ENCODE measurements at regions of chr16 and their contacts with region 1.

Region 1: DNA sequence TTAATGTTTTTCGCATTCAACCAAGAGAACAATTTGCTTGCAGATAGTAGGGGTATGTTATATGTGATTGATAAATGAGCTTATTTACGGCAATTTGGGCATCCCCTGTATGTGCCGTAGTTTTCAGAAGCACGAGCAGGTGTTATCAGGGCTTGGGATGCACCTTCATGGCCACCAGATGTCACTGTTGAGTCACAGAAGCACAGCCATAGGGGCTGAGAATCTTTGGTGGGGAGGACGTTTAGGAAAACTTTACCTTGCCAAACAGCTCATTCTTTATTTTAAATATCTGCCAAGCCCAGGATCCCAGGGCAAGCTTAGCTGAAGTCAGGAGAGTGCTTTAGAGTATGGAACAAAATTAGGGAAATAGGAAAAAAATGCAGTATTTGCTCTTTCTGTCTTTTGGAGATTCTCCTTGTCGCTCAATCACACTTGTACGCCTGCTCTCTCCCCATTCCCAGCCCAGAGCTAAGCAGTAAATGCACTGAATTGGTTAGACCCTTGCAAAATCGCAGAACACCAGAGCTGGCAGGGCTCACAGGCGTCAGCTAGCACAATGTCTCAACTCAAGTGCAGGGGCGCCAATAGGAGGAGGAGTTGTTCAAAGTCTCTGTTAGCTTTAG is 93.6 kb upstream of the MPHOSPH6 start:
- DNase-seq: peak; percentile 55
- H3K4me3 ChIP-seq: no peak overlapping the region
- H3K27ac ChIP-seq: no peak overlapping the region
- H3K4me1 ChIP-seq: no peaks in the 10 kb centered on the region
- H3K27me3 ChIP-seq: peaks cover 4 to 13% of the 10 kb centered on the region in 2 experiments
- CTCF ChIP-seq: peak; percentile 84 to 85
- POLR2A ChIP-seq: no peak

Region 2: DNA sequence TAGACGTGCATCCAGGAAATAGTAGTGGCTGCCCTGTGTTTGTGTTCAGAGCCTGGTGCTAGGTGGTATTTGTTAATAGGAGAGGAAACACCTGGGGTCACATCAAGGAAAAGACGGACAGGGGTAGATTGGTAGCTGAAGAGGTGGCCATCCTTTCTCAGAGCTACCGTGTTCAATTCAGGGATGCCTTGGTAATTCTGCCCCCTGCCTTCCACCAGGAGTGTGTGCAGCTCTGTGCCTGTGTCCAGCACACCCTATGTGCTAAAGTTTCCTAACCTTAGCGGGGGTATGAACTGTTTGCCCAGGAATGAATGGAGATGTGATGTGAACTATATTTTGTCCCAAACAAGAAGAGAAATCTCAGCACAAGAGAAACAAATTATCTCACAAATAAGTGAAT is 80.5 kb after region 1 on chr16:
- CTCF ChIA-PET with region 1: interaction called, 11 read pairs
- POLR2A ChIA-PET with region 1: no interaction called
- dilution Hi-C with region 1: no loop called
- intact Hi-C with region 1: loop called (anchors 1 kb)
- DNase-seq: no peak
- H3K4me3 ChIP-seq: no peak overlapping the region
- H3K27ac ChIP-seq: no peak overlapping the region
- H3K4me1 ChIP-seq: no peaks in the 10 kb centered on the region
- H3K27me3 ChIP-seq: peaks cover 0 to 6% of the 10 kb centered on the region in 2 experiments
- CTCF ChIP-seq: peak; percentile 28 to 44
- POLR2A ChIP-seq: no peak

Region 3: DNA sequence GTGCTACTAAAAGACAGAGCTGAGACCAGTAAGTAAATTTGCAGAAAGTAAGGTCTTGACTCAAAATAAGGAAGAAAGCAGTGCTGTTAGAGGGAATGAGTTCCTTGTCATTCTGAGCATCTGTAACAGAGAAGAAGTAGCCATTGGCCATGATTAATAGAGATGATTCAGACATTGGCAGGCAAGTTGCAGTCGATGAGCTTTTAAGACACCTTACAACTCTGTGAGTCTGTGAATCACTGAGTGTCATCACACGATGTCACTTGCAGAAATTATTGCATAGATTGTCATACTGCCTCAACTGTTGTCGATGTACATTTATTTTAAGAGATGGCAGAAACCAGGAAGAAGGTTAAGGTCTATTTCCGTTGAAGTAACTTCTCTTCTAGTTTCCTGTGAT is 162.0 kb after region 1 on chr16:
- CTCF ChIA-PET with region 1: no interaction called
- POLR2A ChIA-PET with region 1: no interaction called
- dilution Hi-C with region 1: no loop called
- intact Hi-C with region 1: no loop called
- DNase-seq: no peak
- H3K4me3 ChIP-seq: no peak overlapping the region
- H3K27ac ChIP-seq: no peak overlapping the region
- H3K4me1 ChIP-seq: no peaks in the 10 kb centered on the region
- H3K27me3 ChIP-seq: peaks cover 6 to 21% of the 10 kb centered on the region in 2 experiments
- CTCF ChIP-seq: no peak
- POLR2A ChIP-seq: no peak

Region 4: DNA sequence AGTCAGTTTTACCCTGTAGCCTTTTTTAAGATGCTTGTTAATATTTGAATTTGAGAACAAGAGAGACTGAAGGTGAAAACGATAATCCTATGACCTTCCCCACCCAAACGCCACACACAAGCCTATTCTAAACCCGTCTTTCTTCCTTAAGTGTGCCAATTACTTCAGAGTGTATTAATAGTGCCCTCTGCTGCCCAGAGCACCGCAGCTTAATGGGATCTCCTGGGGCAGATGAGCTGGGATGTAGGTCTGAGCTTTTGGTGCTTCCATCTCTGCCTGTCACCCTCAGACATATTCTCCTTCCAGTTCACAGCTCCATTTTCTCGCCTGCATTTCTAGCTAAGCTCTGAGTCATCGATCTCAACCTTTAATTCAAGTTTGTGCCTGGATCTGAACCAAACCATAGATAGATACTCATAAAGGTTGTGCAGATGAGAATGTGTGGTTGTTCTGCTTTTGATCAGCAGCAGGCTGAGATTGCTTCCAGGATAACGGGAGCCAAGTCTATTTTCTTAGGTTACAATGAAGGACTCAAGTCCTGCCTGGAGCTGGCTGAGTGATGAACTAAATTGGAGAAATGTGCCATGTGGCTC is 316.8 kb after region 1 on chr16:
- CTCF ChIA-PET with region 1: interaction called, 4 read pairs
- POLR2A ChIA-PET with region 1: no interaction called
- dilution Hi-C with region 1: no loop called
- intact Hi-C with region 1: loop called (anchors 10 kb)
- DNase-seq: peak; percentile 15
- H3K4me3 ChIP-seq: no peak overlapping the region
- H3K27ac ChIP-seq: no peak overlapping the region
- H3K4me1 ChIP-seq: no peaks in the 10 kb centered on the region
- H3K27me3 ChIP-seq: peaks cover 5 to 16% of the 10 kb centered on the region in 2 experiments
- CTCF ChIP-seq: peak; percentile 10 to 23
- POLR2A ChIP-seq: no peak

Region 5: DNA sequence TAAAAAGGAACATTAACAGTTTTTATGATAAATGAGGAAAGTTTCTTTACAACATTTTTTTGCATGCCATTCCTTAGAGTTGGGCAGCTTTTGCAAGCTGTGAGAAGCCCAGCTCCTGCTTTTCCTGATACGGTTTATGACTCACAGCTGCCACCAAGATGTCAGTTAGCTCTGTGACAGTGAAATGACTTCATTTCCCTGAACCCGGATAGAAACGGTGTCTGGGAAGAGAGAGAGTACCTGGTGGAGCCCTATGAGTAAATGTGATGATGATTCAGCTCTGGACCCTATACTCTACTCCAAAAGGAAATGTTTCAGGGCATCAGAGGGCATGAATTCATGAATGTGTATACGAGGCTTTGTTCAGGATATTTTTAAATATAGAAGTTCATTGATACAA is 1177.9 kb after region 1 on chr16:
- CTCF ChIA-PET with region 1: interaction called, 45 read pairs
- POLR2A ChIA-PET with region 1: no interaction called
- dilution Hi-C with region 1: no loop called
- intact Hi-C with region 1: loop called (anchors 1 kb)
- DNase-seq: peak; percentile 22
- H3K4me3 ChIP-seq: no peak overlapping the region
- H3K27ac ChIP-seq: no peak overlapping the region
- H3K4me1 ChIP-seq: no peaks in the 10 kb centered on the region
- H3K27me3 ChIP-seq: no peaks in the 10 kb centered on the region
- CTCF ChIP-seq: no peak
- POLR2A ChIP-seq: no peak

Region 6: DNA sequence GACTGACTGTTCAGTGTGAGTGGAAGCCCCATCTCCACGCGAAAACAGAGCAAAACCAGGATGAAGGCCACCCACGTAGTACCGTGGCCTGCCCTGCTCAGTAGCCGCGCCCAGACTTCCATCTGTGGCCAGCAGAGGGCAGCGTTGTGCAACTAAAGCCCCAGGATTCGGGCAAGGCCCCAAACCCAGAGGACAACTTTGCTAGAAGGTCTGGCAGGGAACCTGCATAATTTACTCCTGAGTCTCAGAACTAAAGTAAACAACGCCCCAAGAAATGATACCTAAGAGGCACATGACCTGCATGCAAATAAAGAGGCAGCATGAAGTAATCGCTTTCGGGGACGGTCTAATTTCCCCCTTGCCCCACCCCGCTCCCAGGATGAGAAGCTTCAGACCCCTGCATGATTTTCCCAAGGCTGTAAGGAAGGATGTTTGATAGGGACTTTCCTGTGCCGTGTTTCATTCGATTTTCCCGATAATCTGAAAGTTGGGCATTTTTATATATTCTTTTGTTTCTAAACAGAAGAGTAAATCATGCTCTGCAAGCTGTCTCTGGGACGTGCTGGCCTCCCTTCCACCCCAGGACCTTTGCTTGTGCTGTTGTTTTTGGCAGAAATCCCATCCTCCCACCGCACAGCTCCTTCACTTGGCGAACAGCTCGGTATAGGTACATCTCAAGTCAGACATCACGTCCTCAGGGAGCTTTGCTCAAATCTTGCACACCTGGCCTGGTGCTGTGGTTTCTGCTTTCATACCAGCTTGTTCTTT is 1562.7 kb after region 1 on chr16:
- CTCF ChIA-PET with region 1: no interaction called
- POLR2A ChIA-PET with region 1: no interaction called
- dilution Hi-C with region 1: no loop called
- intact Hi-C with region 1: loop called (anchors 2 kb)
- DNase-seq: peak; percentile 65
- H3K4me3 ChIP-seq: no peak overlapping the region
- H3K27ac ChIP-seq: no peak overlapping the region
- H3K4me1 ChIP-seq: no peaks in the 10 kb centered on the region
- H3K27me3 ChIP-seq: peaks cover under 1 to 11% of the 10 kb centered on the region in 2 experiments
- CTCF ChIP-seq: peak; percentile 89 to 91
- POLR2A ChIP-seq: no peak

Measured in endothelial cell of umbilical vein (primary cell).